CD4-positive, alpha-beta T cell (primary cell): ENCODE measurements at regions of chr2 and their contacts with region 1.

Region 1: GRCh38 chr2:45494269-45494977 is 116.6 kb downstream of the SRBD1 start:
- DNase-seq: peak in 3 of 14 experiments; percentile 50 to 64 (median 59)
- ATAC-seq: no peak
- H3K4me3 ChIP-seq: no peak overlapping the region
- H3K4me3 Mint-ChIP-seq: no peak overlapping the region
- H3K27ac ChIP-seq: no peak overlapping the region
- H3K27ac Mint-ChIP-seq: no peak overlapping the region
- H3K4me1 ChIP-seq: no peaks in the 10 kb centered on the region
- H3K4me1 Mint-ChIP-seq: peaks cover 6% of the 10 kb centered on the region
- H3K27me3 ChIP-seq: no peaks in the 10 kb centered on the region
- H3K27me3 Mint-ChIP-seq: no peaks in the 10 kb centered on the region
- CTCF ChIP-seq: peak; percentile 78

Region 2: DNA sequence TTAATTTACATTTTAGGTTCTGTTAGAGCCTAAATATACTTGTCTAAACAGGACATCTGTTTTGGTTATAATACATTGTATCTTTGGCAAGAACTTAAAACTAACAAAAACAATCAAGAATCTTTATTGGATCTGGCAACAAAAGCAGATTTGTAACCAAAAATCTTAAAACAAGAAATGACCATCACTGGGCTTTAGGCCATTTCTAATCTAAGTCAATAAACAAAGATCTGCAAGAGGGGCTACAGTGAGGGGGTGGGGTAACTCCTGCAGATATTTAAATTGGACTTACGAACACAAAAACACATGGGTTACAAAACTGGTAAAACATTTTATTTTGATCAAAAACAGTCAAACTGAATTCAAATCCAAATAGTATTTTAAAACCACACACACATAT is 39.3 kb after region 1 on chr2:
- CTCF ChIA-PET with region 1: no interaction called
- POLR2A ChIA-PET with region 1: no interaction called
- intact Hi-C with region 1: loop called in 1 of 2 experiments (anchors 1 kb)
- DNase-seq: no peak
- ATAC-seq: no peak
- H3K4me3 ChIP-seq: no peak overlapping the region
- H3K4me3 Mint-ChIP-seq: no peak overlapping the region
- H3K27ac ChIP-seq: no peak overlapping the region
- H3K27ac Mint-ChIP-seq: no peak overlapping the region
- H3K4me1 ChIP-seq: no peaks in the 10 kb centered on the region
- H3K4me1 Mint-ChIP-seq: no peaks in the 10 kb centered on the region
- H3K27me3 ChIP-seq: no peaks in the 10 kb centered on the region
- H3K27me3 Mint-ChIP-seq: no peaks in the 10 kb centered on the region
- CTCF ChIP-seq: no peak